Spleen (tissue), 13 donors: ENCODE measurements at regions of chrX and their contacts with region 1.

Region 1: DNA sequence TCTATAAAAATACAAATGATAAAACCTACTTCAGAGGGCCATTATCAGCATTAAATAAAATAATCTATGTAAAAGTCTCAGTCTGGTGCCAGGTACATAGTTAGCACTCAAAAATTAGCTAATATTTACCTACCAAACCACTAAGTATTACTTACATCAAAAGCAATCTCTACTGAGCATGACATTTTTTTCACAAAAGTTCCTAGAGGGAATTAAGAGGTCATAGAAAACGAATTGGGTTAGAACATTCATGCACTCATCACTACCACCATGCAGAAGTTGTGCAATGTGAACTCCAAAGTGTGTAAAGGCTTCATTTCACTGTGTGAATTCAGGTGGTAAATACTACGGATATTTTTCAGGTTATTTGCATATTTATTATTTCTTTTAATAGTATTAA is 209.5 kb upstream of the FGF13 start:
- DNase-seq: no peak
- H3K4me3 ChIP-seq: no peak overlapping the region
- H3K27ac ChIP-seq: no peak overlapping the region
- H3K4me1 ChIP-seq: no peaks in the 10 kb centered on the region
- H3K27me3 ChIP-seq: peaks cover 0 to 2% (median 0%) of the 10 kb centered on the region in 7 donors
- CTCF ChIP-seq: no peak
- POLR2A ChIP-seq: no peak

Region 2: DNA sequence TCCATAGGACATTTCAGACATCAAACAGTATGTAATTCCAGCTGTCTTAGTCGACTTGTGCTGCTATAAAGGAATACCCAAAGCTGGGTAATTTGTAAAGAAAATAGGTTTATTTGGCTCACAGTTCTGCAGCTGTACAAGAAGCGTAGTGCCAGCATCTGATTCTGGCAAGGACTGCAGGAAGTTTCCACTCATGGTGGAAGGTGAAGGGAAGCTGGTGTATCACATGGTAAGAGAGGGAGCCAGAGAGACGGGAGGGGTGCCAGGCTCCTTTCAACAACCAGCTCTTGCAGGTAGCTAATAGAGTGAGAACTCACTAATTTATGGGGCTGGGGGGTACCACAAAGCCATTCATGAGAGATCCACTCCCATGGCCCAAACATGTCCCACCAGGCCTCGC is 43.5 kb after region 1 on chrX:
- intact Hi-C with region 1: loop called (anchors 2 kb)
- DNase-seq: no peak
- H3K4me3 ChIP-seq: no peak overlapping the region
- H3K27ac ChIP-seq: no peak overlapping the region
- H3K4me1 ChIP-seq: no peaks in the 10 kb centered on the region
- H3K27me3 ChIP-seq: peaks cover 0 to 5% (median 0%) of the 10 kb centered on the region in 7 donors
- CTCF ChIP-seq: no peak
- POLR2A ChIP-seq: no peak